Activated CD4-positive, alpha-beta memory T cell treated with anti-CD3 and anti-CD28 coated beads for 36 hours (primary cell): ENCODE measurements at regions of chr12 and their contacts with region 1.

Region 1: DNA sequence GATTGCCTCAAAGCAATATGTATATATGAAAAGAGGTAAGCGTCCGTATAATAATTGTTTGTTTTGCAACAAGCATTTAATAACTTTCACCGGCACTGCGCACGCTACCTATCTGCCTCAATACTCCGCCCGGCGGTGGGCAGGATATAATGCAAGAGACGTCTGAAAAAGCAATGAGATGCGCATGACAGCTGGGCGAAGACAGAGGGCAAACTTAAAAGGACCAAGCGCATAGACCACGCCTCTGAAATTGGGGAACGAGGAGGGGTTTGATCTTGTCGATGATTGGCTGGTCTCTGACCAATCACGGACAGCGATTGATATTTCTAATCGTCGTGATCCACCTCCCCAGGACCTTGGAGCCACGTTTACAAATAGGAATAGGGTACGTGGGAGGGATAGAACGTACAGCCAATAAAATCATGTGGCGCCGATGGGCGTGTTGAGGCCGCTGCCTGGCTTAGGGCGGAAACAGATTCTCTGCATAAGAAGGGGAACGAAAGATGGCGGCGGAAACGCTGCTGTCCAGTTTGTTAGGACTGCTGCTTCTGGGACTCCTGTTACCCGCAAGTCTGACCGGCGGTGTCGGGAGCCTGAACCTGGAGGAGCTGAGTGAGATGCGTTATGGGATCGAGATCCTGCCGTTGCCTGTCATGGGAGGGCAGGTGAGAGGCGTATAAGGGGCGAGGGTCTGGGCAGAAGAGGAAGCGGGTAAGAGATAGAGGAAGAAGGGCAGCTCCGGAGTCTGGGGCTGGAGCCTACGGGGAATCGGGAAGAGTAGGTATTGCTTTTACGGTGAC is at the start of gene OS9:
- DNase-seq: peak; percentile 97
- H3K4me3 Mint-ChIP-seq: no peak within 1 kb of the TSS
- H3K27ac Mint-ChIP-seq: no peak within 1 kb of the TSS
- H3K4me1 Mint-ChIP-seq: no peaks in the 10 kb centered on the region
- H3K27me3 Mint-ChIP-seq: peaks cover under 1% of the 10 kb centered on the region
- total RNA-seq, gene OS9: 73.4 to 74.8 TPM

Region 2: GRCh38 chr12:56688129-56688845 is 1005.6 kb before region 1 on chr12 and contains the start of gene PTGES3:
- CTCF ChIA-PET with region 1: no interaction called
- POLR2A ChIA-PET with region 1: no interaction called
- intact Hi-C with region 1: no loop called
- DNase-seq: peak; percentile 99
- H3K4me3 Mint-ChIP-seq: peak within 1 kb of the TSS; percentile 100
- H3K27ac Mint-ChIP-seq: peak within 1 kb of the TSS; percentile 94
- H3K4me1 Mint-ChIP-seq: peaks cover 13% of the 10 kb centered on the region
- H3K27me3 Mint-ChIP-seq: no peaks in the 10 kb centered on the region
- total RNA-seq, gene PTGES3: 355 to 356 TPM

Region 3: GRCh38 chr12:56931474-56931978 is 762.3 kb before region 1 on chr12:
- CTCF ChIA-PET with region 1: no interaction called
- POLR2A ChIA-PET with region 1: no interaction called
- intact Hi-C with region 1: no loop called
- DNase-seq: no peak
- H3K4me3 Mint-ChIP-seq: no peak overlapping the region
- H3K27ac Mint-ChIP-seq: no peak overlapping the region
- H3K4me1 Mint-ChIP-seq: peaks cover 3% of the 10 kb centered on the region
- H3K27me3 Mint-ChIP-seq: no peaks in the 10 kb centered on the region

Region 4: GRCh38 chr12:57632694-57633477 is 61.0 kb before region 1 on chr12 and contains the start of gene B4GALNT1:
- CTCF ChIA-PET with region 1: interaction called, 3 read pairs
- POLR2A ChIA-PET with region 1: no interaction called
- intact Hi-C with region 1: loop called (anchors 5 kb)
- DNase-seq: peak; percentile 73
- H3K4me3 Mint-ChIP-seq: peak within 1 kb of the TSS; percentile 71
- H3K27ac Mint-ChIP-seq: no peak within 1 kb of the TSS
- H3K4me1 Mint-ChIP-seq: peaks cover 11% of the 10 kb centered on the region
- H3K27me3 Mint-ChIP-seq: peaks cover 43% of the 10 kb centered on the region
- total RNA-seq, gene B4GALNT1: 1.7 to 2.1 TPM